Right ventricle myocardium inferior (tissue), 1 donor: ENCODE measurements at regions of chr9 and their contacts with region 1.

Region 1: DNA sequence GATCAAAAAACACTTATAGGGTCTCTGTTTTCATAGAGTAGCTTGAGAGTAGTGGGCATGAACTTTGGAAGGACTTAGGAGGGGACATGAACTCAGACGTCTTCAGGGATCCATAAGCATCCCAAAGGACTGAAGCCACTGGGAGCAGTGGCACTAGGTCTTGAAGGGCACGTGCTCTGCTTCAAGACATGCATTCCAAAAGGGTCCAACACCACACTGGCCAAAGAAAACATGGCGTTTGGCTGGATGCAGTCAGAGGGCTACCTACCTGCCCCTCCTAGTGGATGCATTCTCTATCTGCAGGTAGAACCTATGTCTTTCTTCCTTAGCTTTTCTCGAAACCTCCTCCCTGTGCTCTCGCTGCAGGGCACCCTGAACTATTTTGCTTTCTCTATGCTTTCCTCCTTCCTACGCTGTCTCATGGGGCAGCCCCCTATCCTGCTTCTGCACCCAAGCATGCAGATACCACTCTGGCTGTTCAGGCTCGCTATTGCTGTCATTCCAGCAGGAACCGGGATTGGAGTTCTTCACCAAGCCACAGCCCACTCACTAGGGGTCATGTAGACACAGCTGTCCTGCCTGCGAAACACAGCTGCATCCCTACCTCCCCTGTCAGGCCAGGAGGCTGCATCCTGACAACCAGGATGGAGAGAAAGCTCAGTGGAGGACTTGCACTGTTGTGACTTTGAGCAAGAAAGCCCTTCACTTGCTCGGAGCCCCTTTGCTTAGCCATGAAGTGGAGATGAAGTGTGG is 11.9 kb downstream of the FAM240B start:
- DNase-seq: no peak
- ATAC-seq: no peak

Region 2: DNA sequence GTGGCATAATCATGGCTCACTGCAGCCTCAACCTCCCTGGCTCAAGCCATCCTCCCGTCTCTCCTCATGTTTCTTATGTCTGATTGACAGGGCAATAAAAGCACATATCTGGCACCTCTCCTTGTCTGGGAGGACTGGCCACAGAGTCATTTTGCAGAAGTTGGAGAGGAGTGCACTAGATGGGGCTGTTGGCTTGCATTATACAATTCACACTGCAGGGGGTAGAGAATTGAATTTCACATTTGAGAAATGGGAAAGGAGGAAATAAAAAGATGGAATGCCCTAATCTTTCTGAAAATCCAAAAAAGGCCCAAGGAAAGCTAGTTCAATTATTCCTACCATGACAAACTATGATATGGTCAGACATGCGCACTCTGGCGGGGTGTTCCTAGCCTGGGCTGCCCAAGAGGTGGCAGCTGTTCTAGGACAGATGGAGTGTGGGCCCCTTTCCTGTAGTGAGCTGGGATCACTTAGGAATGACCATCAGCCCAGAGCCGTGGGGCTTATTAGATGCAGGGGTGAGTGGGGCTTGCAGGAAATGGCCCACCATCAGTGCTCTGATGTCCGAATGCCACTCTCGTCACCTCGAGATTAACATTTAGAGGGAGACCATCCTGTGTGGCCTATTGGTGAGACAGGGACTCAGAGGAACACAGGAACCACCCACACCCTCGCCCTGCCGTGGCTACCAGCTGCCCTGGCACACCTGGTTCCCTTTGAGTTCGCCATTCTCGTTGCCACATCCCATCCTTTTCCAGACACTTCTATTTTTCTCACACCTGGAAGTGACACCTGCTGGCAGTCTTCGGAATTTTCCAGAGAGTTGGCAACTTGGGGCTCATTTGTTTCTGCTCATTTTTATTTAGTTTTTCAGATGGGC is 65.8 kb before region 1 on chr9:
- intact Hi-C with region 1: loop called (anchors 5 kb)
- DNase-seq: no peak
- ATAC-seq: peak; percentile 87

Region 3: GRCh38 chr9:38747067-38747466 is 39.0 kb after region 1 on chr9:
- intact Hi-C with region 1: no loop called
- DNase-seq: no peak
- ATAC-seq: no peak